ENCODE measurements at regions of chr13 and their contacts with region 1.

Region 1: GRCh38 chr13:49443704-49444523 is at the starts of genes CAB39L and SETDB2:
- H3K4me3 ChIP-seq: peak within 1 kb of the TSS; percentile 90
- H3K27ac ChIP-seq: peak within 1 kb of the TSS; percentile 77
- H3K4me1 ChIP-seq: no peaks in the 10 kb centered on the region
- CTCF ChIP-seq: no peak; the same call in 1 of the 2 replicates

Region 2: DNA sequence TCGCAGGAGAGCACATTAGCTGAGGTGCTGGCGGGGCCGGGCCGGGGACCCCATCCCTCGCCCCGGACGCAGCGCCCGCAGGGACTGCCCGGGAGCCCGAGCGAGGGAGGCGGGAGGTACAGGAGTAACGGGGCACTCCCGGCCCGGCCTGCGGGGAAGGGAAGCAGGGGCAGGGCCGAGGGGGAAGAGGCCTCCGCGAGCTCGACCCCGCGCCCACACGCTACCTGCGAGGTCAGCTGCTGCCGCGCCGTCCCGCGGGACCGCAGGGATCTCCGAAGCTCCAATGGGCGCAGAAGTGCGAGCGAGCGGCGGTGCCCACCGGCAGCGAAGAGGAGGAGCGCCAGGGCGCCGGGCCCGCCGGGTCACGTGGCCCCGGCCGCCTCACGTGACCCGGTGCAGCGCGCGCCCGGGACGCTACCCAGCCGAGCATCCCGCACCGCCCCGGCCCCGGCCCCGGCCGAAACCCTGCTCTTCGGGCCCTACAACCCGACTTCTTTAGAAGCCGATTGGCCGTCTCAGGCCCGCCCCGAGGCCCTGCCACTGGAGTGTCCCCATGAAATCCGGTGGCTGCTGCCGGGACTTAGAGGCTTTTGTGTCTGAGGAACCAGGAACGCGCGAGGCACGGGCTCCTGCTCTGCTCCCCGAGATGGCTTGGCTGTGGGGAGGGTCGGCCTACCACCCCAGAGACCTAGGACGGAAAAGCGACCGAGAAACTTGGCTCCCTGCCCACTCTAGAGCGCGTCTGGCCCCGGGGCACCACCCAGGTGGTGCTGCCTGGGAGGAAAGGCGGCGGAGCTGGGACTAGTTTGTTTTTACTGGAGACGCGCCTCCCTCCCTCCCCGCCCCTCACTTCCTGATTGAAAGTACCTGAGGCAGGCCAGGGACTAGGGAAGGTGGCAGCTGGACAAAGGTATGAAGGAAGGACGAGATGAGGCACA is 141.6 kb after region 1 on chr13 and contains the start of gene RCBTB1:
- CTCF ChIA-PET with region 1: no interaction called
- POLR2A ChIA-PET with region 1: interaction called, 10 read pairs
- H3K4me3 ChIP-seq: peak within 1 kb of the TSS; percentile 94
- H3K27ac ChIP-seq: peak within 1 kb of the TSS; percentile 85
- H3K4me1 ChIP-seq: no peaks in the 10 kb centered on the region
- CTCF ChIP-seq: no peak